Right ventricle myocardium inferior (tissue), 1 donor: ENCODE measurements at regions of chr13 and their contacts with region 1.

Region 1: DNA sequence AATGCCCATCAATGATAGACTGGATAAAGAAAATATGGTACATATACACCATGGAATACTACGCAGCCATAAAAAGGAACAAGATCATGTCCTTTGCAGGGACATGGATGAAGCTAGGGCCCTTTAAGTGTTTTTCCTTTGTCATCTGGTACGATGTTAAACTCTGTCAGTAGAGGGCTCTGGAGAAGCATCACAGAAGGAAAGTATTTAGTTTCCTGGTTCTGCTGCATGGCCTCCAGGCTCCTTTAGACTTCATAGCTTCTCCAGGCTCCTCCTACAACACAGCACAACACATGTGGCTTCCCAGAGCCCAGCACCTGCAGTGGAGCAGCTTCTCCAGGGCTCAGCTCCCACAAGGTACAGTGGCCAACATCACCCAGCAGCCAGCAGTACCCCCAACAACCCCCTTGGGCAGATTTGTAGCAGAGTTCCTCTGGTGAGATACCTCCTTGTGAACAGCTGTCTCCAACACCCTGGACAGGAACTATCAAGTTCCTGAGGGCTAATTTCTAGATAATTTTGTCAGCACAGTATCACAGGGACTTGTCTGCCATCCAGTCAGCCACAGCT is 63.4 kb downstream of the KCTD12 start:
- DNase-seq: no peak
- ATAC-seq: peak; percentile 23

Region 2: GRCh38 chr13:75384879-75385707 is 1437.7 kb before region 1 on chr13:
- intact Hi-C with region 1: no loop called
- DNase-seq: no peak
- ATAC-seq: peak; percentile 72

Region 3: GRCh38 chr13:76667551-76667950 is 155.2 kb before region 1 on chr13:
- intact Hi-C with region 1: loop called (anchors 5 kb)
- DNase-seq: no peak
- ATAC-seq: peak; percentile 51

Region 4: DNA sequence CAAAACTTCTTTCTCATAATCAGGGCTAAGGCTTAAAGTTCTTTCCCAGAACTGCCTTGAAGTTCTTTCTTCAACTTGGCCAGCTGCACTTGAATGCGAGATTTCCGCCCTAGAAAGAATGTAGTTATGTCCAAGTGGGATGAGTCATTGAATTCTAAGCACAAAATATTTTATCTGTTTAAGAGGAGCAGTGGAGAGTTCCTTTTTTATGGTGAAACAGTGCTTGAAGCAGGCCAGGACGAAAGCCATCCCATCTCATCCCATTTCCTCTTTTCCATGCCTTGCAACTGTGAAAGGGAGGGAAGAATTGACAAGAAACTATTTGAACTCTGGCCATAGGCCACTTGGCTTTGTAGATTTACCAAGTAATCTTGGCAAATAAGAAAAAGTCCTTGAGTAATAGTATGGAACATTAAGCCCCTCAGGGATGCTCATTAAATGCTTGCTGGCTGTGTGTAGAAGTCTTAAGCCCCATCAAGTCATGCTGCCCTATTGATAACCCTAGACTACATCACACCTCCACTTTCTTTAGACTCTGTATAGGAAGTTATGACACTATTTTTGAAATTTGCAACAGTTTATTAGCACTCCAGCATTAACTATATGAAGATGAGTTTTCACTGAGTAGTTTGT is 111.1 kb before region 1 on chr13:
- intact Hi-C with region 1: loop called (anchors 10 kb)
- DNase-seq: no peak
- ATAC-seq: peak; percentile 95

Region 5: DNA sequence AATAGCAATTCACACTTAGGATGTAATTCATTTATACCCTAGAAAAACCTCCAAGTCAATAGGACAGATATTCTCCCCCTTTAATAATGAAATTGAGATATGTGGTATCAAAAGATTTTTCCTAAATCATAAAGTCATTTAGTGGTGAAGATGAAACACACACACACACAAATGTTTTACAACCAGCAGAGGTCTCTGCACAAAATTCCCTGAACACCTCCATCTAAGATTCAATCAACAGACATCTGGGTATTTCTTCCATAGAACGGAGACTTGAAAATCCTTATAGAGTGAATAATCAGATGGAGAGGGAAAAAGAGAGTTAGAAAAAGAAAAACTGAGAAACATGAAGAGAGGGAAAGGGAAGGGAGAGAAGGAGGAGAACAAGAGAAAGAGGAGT is 451.3 kb after region 1 on chr13:
- intact Hi-C with region 1: no loop called
- DNase-seq: no peak
- ATAC-seq: no peak